ENCODE measurements at regions of chr4 and their contacts with region 1.

Region 1: DNA sequence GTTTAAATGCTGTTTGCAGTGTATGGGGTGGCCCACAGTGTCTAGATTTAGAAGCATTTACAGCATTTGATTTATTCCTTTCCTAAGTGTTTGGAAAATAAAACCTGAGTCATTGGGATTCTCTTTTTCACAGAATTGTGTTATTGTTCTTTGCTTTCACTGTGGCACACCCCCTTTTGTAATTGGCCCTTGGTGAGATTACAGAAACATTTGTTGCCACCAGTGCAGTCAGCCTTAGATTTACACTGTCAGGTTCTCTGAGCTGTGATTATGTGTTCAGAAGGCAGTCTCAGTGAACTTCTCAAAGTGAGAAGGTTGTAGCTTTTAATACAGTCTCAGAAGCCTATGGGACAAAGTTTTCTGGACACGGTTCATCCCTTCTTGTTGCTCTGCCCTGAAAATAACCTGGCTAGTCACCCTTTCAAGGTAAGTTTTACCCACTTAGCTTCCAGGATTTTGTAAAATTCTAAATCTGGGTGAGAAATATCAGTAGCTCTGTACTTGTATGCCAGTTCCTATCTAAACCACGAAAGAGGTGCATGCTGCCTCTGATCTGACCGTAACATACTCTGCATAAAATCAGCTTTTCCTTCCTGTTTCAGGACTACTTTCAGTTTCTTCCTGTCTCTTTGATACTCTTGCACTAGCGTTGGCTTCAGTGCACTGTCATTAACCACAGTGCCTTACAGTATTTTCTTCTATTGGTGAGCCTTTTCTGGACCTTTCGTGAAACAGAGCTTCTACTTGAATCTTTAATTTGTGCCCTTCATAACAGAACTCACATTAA is 12.6 kb downstream of the RUFY3 start:
- DNase-seq: no peak
- ATAC-seq: peak; percentile 96
- H3K4me3 Mint-ChIP-seq: peak overlapping the region; percentile 78
- H3K27ac Mint-ChIP-seq: peak overlapping the region; percentile 85
- H3K4me1 Mint-ChIP-seq: peaks cover 52% of the 10 kb centered on the region
- H3K27me3 Mint-ChIP-seq: no peaks in the 10 kb centered on the region
- CTCF ChIP-seq: no peak

Region 2: GRCh38 chr4:70704331-70705145 is 29.8 kb before region 1 on chr4:
- CTCF ChIA-PET with region 1: interaction called, 50 read pairs
- POLR2A ChIA-PET with region 1: interaction called, 91 read pairs
- intact Hi-C with region 1: loop called (anchors 1 kb)
- DNase-seq: peak; percentile 69
- ATAC-seq: peak; percentile 67
- H3K4me3 Mint-ChIP-seq: peak overlapping the region; percentile 93
- H3K27ac Mint-ChIP-seq: peak overlapping the region; percentile 89
- H3K4me1 Mint-ChIP-seq: peaks cover 34% of the 10 kb centered on the region
- H3K27me3 Mint-ChIP-seq: no peaks in the 10 kb centered on the region
- CTCF ChIP-seq: no peak

Region 3: DNA sequence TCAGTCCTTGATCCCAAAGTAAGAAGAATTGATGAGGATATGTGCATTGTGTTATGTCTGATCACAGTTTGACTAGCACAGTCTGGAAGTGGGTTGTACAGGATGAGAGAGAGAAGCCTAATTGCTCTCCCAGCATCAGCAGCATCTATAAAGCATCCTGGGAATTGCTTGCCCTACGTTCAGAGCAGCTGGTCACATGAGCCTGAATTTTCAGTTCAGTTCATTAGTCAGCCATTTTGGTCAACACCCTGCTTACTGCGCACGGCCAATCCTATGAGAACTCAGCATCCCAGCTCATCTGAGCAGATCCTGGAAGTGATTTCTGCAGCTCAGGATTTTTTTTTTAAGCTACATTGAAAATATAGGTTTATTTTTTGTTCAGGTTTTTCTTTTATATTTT is 12.6 kb before region 1 on chr4 and contains the start of gene RUFY3:
- CTCF ChIA-PET with region 1: interaction called, 18 read pairs
- POLR2A ChIA-PET with region 1: interaction called, 49 read pairs
- intact Hi-C with region 1: loop called (anchors 1 kb)
- DNase-seq: no peak
- ATAC-seq: no peak
- H3K4me3 Mint-ChIP-seq: no peak within 1 kb of the TSS
- H3K27ac Mint-ChIP-seq: no peak within 1 kb of the TSS
- H3K4me1 Mint-ChIP-seq: peaks cover 9% of the 10 kb centered on the region
- H3K27me3 Mint-ChIP-seq: no peaks in the 10 kb centered on the region
- CTCF ChIP-seq: no peak
- total RNA-seq, gene RUFY3: 55.0 and 69.4 TPM in 2 replicates

Region 4: DNA sequence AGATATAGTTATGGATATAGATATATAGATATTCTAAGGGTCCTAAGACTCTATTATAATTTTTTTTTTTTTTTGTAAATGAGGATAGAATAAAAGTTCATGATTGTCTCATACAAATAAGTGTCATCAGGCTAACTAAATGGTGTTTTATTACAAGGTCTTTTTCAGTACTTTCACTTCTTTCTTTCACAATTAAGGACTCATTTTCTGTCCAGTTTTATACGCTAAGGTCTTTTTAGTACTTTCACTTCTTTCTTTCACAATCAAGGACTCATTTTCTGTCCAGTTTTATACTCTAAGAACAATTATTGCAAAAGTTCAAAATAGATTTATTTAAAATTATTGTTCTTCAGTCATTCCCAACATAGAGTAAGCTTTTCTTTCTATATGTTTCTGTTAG is 20.1 kb after region 1 on chr4:
- CTCF ChIA-PET with region 1: interaction called, 14 read pairs
- POLR2A ChIA-PET with region 1: interaction called, 21 read pairs
- intact Hi-C with region 1: loop called (anchors 1 kb)
- DNase-seq: no peak
- ATAC-seq: peak; percentile 70
- H3K4me3 Mint-ChIP-seq: peak overlapping the region; percentile 65
- H3K27ac Mint-ChIP-seq: peak overlapping the region; percentile 86
- H3K4me1 Mint-ChIP-seq: peaks cover 64% of the 10 kb centered on the region
- H3K27me3 Mint-ChIP-seq: no peaks in the 10 kb centered on the region
- CTCF ChIP-seq: no peak

Region 5: GRCh38 chr4:70839589-70840093 is 105.3 kb after region 1 on chr4 and contains the start of gene GRSF1:
- CTCF ChIA-PET with region 1: interaction called, 11 read pairs
- POLR2A ChIA-PET with region 1: interaction called, 11 read pairs
- intact Hi-C with region 1: no loop called
- DNase-seq: peak; percentile 88
- ATAC-seq: peak; percentile 84
- H3K4me3 Mint-ChIP-seq: peak within 1 kb of the TSS; percentile 93
- H3K27ac Mint-ChIP-seq: peak within 1 kb of the TSS; percentile 93
- H3K4me1 Mint-ChIP-seq: peaks cover 63% of the 10 kb centered on the region
- H3K27me3 Mint-ChIP-seq: no peaks in the 10 kb centered on the region
- CTCF ChIP-seq: no peak
- total RNA-seq, gene GRSF1: 61.1 and 63.5 TPM in 2 replicates

Region 6: DNA sequence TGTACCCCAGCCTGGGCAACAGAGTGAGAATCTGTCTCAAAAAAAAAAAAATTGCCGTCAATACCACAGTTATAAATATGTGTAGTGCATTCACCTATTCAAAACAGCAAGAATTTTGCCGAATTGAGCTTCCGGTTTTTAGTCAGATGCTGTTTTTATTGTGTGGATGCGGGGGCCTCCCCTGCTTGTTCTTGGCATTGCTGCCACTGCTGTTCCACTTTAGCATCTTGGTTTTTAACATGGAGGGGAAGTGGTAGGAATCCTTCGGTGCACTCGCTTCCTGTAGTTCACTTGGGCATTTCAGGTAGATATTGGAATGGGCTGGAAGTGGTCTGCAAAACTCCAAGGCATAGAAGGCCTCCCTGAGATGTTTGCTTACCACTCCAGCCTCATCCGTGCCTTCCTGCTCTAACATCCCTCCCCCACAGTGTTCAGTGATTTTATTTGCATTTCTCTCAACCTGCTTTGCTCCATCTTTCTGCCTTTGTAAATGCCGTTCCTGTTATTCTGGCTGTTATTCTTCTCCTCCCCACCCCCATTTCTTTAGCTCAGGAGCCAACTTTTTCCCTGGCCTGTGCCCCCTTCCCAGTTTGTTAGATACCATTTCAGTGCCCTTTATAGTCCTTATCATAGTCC is 193.3 kb after region 1 on chr4:
- CTCF ChIA-PET with region 1: interaction called, 4 read pairs
- POLR2A ChIA-PET with region 1: interaction called, 3 read pairs
- intact Hi-C with region 1: loop called (anchors 5 kb)
- DNase-seq: no peak
- ATAC-seq: peak; percentile 45
- H3K4me3 Mint-ChIP-seq: peak overlapping the region; percentile 33
- H3K27ac Mint-ChIP-seq: peak overlapping the region; percentile 68
- H3K4me1 Mint-ChIP-seq: peaks cover 51% of the 10 kb centered on the region
- H3K27me3 Mint-ChIP-seq: no peaks in the 10 kb centered on the region
- CTCF ChIP-seq: no peak

Region 7: GRCh38 chr4:71009890-71010588 is 275.7 kb after region 1 on chr4:
- CTCF ChIA-PET with region 1: interaction called, 10 read pairs
- POLR2A ChIA-PET with region 1: interaction called, 5 read pairs
- intact Hi-C with region 1: no loop called
- DNase-seq: no peak
- ATAC-seq: peak; percentile 46
- H3K4me3 Mint-ChIP-seq: peak overlapping the region; percentile 2
- H3K27ac Mint-ChIP-seq: peak overlapping the region; percentile 64
- H3K4me1 Mint-ChIP-seq: peaks cover 65% of the 10 kb centered on the region
- H3K27me3 Mint-ChIP-seq: no peaks in the 10 kb centered on the region
- CTCF ChIP-seq: peak; percentile 56

Region 8: GRCh38 chr4:71785959-71786358 is 1051.6 kb after region 1 on chr4:
- CTCF ChIA-PET with region 1: no interaction called
- POLR2A ChIA-PET with region 1: no interaction called
- intact Hi-C with region 1: no loop called
- DNase-seq: no peak
- ATAC-seq: no peak
- H3K4me3 Mint-ChIP-seq: no peak overlapping the region
- H3K27ac Mint-ChIP-seq: no peak overlapping the region
- H3K4me1 Mint-ChIP-seq: no peaks in the 10 kb centered on the region
- H3K27me3 Mint-ChIP-seq: no peaks in the 10 kb centered on the region
- CTCF ChIP-seq: no peak

Measured in activated B cell treated with CpG ODN at 0.5 μM for 24 hours (primary cell).